SK-N-SH (cell line): ENCODE measurements at regions of chr2 and their contacts with region 1.

Region 1: GRCh38 chr2:216130346-216130971 is 21.3 kb downstream of the XRCC5 start:
- DNase-seq: peak; percentile 14
- H3K4me3 ChIP-seq: no peak overlapping the region
- H3K27ac ChIP-seq: no peak overlapping the region; a peak in 1 of 4 replicates
- H3K4me1 ChIP-seq: peaks cover 0 to 3% of the 10 kb centered on the region in 2 experiments; a peak in 2 of 4 replicates
- H3K27me3 ChIP-seq: no peaks in the 10 kb centered on the region
- CTCF ChIP-seq: no peak; the same call in 1 of the 2 replicates
- EP300 ChIP-seq: no peak
- RAD21 ChIP-seq: 0 out of 2 replicates have a peak, but pooled peaks have one; percentile 4

Region 2: DNA sequence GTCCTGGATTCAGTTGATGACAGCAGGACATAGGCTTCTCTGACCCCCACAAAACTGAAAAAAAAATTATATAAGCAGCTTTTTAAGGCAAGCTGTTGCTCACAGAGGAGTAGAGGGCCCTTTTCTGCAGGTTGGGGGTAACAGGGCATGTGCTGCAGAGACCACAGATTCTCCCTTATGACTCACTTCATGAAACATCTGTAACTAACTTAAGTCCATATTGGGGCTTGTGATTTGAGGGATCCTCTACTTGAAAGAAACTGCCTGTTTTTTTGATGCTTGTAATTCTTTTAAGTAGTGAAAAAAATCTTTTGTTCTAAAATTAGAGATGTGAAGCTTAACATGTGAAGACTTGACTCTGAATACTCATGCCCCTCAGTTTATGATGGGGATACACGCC is 12.1 kb after region 1 on chr2:
- CTCF ChIA-PET with region 1: interaction called, 10 read pairs
- POLR2A ChIA-PET with region 1: no interaction called
- DNase-seq: no peak
- H3K4me3 ChIP-seq: no peak overlapping the region
- H3K27ac ChIP-seq: peak overlapping the region; percentile 19 to 71; a peak in 3 of 4 replicates
- H3K4me1 ChIP-seq: no peaks in the 10 kb centered on the region
- H3K27me3 ChIP-seq: no peaks in the 10 kb centered on the region
- CTCF ChIP-seq: no peak
- EP300 ChIP-seq: no peak
- RAD21 ChIP-seq: no peak